H1 (cell line): ENCODE measurements at regions of chr10 and their contacts with region 1.

Region 1: DNA sequence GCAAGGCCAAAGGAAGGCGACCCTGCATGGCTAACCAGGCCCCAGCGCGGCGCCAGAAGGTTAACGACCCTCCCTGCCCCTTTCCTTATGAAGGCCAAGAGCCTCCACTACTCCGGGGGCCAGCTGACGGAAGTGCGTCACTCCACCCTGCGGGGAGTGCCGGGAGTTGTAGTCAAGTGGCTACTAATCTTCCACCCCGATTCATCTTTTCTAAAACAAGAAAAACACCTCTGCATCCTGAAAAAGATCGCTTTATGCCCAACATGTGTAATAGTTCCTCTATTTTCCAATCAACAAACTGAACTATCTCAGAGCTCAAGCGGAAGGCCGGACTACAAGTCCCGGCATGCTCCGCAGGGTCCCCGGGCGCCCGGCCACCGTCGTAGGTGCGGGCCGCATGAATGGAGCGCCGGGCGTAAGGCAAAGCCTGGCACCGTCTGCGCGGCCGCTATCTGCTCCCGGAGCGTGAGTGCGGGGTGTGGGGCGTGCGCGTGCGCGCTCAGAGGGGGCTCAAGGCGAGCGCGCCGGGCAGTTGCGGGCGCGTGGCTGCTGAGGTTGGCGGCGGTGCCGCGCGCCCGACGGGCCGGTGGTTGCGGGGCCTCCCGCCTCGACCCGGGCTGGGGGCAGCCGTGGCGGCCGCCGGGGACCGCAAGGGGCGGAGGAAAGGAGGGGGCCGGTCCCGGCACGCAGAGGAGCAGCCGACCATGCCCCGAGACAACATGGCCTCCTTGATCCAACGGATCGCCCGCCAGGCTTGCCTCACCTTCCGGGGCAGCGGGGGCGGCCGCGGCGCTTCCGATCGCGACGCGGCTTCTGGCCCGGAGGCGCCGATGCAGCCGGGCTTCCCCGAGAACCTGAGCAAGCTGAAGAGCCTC is at the start of gene ADO:
- DNase-seq: peak; percentile 67 to 86
- H3K4me3 ChIP-seq: peak within 1 kb of the TSS; percentile 78 to 91 (median 88)
- H3K27ac ChIP-seq: peak within 1 kb of the TSS; percentile 83
- H3K4me1 ChIP-seq: peaks cover 3 to 6% (median 4%) of the 10 kb centered on the region in 4 experiments; a peak in 4 of 7 replicates
- H3K27me3 ChIP-seq: no peaks in the 10 kb centered on the region
- CTCF ChIP-seq: no peak
- EP300 ChIP-seq: no peak
- POLR2A ChIP-seq: peak; percentile 58 to 93
- RAD21 ChIP-seq: no peak; a peak in 1 of 4 replicates
- total RNA-seq, gene ADO: 27.9 and 29.2 TPM in 2 replicates

Region 2: DNA sequence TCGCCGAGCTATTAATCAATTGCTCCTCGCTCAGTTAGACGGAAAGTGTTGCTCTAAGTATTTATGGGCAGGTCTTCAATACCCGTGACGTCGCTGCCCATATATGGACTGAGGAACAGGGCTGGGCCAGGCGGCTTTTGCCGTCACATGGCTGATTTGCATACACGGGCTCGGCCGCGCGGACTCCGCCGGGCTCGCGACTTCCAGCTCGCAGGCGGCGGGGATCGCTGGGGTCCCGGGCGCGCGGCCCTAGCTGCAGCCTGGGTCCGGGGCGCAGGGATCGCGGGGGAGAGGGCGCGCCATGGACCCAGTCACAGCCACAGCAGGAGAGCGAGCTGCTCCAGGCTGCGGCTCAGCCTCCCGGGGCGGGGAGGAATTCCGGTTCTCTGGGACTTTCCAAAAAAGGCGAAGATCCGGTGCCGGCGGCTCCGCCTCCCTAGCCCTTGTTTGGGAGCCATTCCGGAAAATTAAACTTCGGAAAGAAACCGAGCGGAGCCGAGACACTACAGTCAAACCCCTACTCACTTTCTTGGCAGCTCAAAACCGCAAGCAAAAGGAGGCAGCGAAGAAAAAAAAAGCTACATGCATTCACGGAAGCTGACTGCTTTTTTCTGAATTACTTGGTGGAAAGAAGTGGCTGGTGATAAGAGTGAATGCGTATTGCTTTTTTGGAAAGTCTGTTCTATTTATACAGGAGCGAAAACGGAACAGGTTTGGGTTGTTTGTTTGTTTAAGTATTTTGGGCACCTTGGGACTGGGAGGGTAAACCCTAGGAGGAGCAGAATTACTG is 11.9 kb after region 1 on chr10 and contains the start of gene EGR2:
- CTCF ChIA-PET with region 1: interaction called, 20 read pairs
- POLR2A ChIA-PET with region 1: interaction called, 99 read pairs
- DNase-seq: peak; percentile 66 to 89
- H3K4me3 ChIP-seq: peak within 1 kb of the TSS; percentile 56 to 81 (median 70)
- H3K27ac ChIP-seq: peak within 1 kb of the TSS; percentile 79; the same call in 1 of the 2 replicates
- H3K4me1 ChIP-seq: peaks cover 0 to 11% (median 4%) of the 10 kb centered on the region in 4 experiments; a peak in 4 of 7 replicates
- H3K27me3 ChIP-seq: peaks cover 20 to 64% (median 58%) of the 10 kb centered on the region in 4 experiments
- CTCF ChIP-seq: no peak
- EP300 ChIP-seq: no peak
- POLR2A ChIP-seq: peak; percentile 53 to 72
- RAD21 ChIP-seq: peak in 1 of 2 experiments; percentile 1; a peak in 1 of 4 replicates
- total RNA-seq, gene EGR2: 2.1 and 3.0 TPM in 2 replicates